GM13977 (cell line): ENCODE measurements at regions of chr11 and their contacts with region 1.

Region 1: DNA sequence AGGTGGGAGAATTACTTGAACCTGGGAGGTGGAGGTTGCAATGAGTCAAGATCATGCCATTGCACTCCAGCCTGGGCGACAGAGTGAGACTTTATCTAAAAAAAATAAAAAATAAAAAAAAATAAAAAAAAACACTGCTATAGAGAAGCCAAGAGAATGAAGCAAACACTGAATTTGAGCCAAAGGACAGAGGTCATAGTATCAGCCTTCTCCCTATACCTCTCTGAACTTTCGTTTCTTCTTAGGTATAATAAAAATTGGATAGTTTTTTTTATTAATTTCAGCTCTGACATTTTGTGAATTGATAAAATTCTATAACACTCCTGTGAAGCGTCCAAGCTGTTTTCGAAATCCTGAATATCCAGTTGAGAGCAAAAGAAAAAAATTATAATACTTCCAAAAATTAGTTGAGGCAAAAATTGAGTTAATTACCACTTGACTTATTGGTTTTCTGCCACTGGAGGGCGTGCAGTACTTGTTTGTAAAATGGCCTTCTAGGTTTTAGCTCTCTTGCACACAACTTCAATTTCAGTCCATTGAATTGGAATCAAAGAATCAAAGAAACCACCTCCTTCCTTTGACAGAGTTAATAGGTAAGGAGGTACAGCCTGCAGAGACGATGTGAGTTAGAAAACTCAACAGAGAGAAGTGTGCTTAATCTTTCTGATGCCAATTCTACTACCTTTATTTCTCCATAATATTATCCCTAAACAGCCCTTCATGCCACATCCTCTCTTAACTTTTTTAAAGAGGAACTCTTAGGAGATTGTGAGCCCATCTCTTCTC is 143.2 kb downstream of the BBOX1 start:
- DNase-seq: peak; percentile 28
- CTCF ChIP-seq: peak; percentile 58

Region 2: DNA sequence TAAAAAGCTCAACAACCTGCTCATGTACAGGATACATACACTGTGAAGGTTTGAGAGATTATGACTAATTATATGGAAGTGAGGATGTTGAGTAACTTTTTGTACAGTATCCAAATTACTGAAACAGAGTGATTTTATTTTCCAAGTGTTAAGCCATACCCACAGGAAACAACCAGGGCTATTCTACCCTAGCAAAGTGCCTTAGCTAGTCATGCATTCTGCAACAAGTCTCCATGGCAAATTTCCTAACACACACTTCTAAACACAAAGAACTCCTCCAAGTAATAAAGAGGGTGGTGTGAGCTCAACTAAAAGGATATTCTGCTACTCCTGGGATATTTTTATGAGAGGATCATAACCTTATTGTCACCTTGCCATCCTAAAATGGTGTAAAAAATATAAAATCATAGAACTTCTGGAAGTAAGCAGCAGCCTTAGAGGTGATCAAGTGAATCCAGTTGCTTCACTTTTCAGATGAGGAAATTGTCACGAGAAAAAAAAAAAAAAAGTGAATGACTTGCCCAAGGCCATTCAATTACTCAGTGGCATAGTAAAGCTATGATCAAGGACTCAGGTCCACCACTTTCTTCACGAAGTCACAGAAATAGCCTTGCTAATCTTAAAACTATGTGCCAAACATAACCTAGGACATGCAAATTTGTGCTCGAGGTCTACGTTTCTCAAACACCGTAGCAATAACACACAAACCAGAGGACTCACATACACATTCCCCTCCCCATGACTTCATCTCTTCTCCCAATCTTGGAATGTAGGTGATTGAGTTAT is 284.5 kb after region 1 on chr11:
- in situ Hi-C with region 1: loop called (anchors 10 kb)
- DNase-seq: no peak
- CTCF ChIP-seq: no peak

Region 3: GRCh38 chr11:27497284-27497866 is 313.5 kb after region 1 on chr11:
- in situ Hi-C with region 1: loop called (anchors 10 kb)
- DNase-seq: peak; percentile 15
- CTCF ChIP-seq: peak; percentile 46